Right ventricle myocardium inferior (tissue), 1 donor: ENCODE measurements at regions of chr1 and their contacts with region 1.

Region 1: GRCh38 chr1:38859561-38860453 is at the start of gene RRAGC:
- DNase-seq: peak; percentile 100
- ATAC-seq: peak; percentile 99
- total RNA-seq, gene RRAGC: 24.6 TPM

Region 2: GRCh38 chr1:38735641-38736161 is 124.1 kb before region 1 on chr1:
- intact Hi-C with region 1: no loop called
- DNase-seq: no peak
- ATAC-seq: no peak

Region 3: GRCh38 chr1:38783640-38784229 is 76.1 kb before region 1 on chr1:
- intact Hi-C with region 1: no loop called
- DNase-seq: no peak
- ATAC-seq: no peak

Region 4: DNA sequence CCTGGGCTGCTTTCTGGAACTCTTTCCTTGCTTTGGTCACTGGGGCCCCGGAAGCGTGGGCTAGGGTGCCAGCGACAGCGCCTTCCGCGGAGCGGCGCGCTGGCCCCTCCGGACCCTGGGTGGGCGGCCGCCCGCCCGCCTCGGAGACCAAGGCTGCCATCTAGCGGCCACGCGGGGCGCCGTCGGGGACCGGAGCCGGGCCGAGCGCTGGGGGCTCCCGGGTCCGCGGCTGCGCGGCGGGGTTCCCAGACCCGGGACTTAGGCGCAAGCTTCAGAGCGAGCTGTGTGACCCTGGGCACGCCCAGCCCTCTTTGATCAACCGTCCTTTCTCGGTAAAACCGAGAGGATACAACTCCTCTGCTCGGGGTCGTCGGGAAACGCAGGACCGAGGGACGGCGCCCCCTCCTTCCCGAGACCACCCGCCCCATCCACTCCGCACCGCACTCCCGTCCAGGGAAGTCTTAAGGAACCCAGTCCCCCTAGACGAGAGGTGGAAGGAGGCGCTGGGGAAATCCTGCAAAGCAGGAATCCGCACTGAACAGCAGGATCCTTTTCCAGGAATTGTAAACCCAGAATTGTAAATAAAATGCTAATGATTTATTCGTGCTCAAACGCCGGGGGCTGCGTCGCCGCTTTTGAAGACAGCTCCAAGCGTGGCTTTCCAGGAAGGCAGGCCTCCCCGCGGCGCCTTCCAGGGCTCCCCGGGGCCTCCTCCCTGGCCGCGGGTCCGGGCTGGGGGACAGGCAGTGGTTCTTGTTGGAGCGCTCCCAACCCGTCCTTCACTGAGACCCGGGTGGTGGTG is 41.4 kb before region 1 on chr1:
- intact Hi-C with region 1: no loop called
- DNase-seq: no peak
- ATAC-seq: peak; percentile 46

Region 5: GRCh38 chr1:38873027-38873969 is 13.5 kb after region 1 on chr1 and contains the start of gene MYCBP:
- intact Hi-C with region 1: loop called (anchors 1 kb)
- DNase-seq: peak; percentile 97
- ATAC-seq: peak; percentile 100
- total RNA-seq, gene MYCBP: 16.8 TPM